ENCODE measurements at regions of chr18 and their contacts with region 1.

Region 1: GRCh38 chr18:63131106-63131958 is 188.2 kb downstream of the BCL2 start:
- DNase-seq: no peak
- ATAC-seq: peak; percentile 65
- H3K4me3 Mint-ChIP-seq: no peak overlapping the region
- H3K27ac Mint-ChIP-seq: peak overlapping the region; percentile 70
- H3K4me1 Mint-ChIP-seq: peaks cover 35% of the 10 kb centered on the region
- H3K27me3 Mint-ChIP-seq: no peaks in the 10 kb centered on the region
- CTCF ChIP-seq: no peak

Region 2: DNA sequence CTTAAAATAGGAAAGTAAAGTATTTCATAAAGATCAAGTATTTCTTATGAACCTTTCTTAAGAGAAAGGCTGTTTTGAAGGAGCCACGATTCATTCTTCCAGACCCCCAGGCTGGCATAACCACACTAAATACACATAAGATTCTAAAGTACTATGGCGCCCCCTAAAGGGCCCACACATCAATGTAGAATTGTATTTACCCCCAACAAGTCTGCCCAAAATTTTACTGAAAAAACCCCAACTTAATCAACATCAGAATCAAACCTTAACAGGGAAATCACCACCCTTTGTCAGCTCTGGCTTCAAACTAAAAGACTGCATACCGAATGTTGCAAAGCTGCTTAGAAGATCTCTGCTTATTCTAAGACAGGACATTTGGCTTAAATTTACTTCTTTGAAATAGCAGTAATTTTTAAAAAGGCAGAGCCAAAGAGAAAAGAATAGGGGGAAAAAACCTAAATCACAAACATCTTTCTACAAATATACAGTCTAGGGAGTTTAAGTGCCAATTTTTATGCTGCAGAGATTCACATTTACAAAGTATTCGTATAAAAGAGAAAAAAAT is 208.7 kb after region 1 on chr18:
- CTCF ChIA-PET with region 1: interaction called, 10 read pairs
- POLR2A ChIA-PET with region 1: no interaction called
- intact Hi-C with region 1: no loop called
- DNase-seq: no peak
- ATAC-seq: peak; percentile 45
- H3K4me3 Mint-ChIP-seq: no peak overlapping the region
- H3K27ac Mint-ChIP-seq: no peak overlapping the region
- H3K4me1 Mint-ChIP-seq: no peaks in the 10 kb centered on the region
- H3K27me3 Mint-ChIP-seq: no peaks in the 10 kb centered on the region
- CTCF ChIP-seq: no peak

Region 3: GRCh38 chr18:63648241-63648640 is 516.9 kb after region 1 on chr18:
- CTCF ChIA-PET with region 1: no interaction called
- POLR2A ChIA-PET with region 1: no interaction called
- intact Hi-C with region 1: no loop called
- DNase-seq: no peak
- ATAC-seq: no peak
- H3K4me3 Mint-ChIP-seq: no peak overlapping the region
- H3K27ac Mint-ChIP-seq: no peak overlapping the region
- H3K4me1 Mint-ChIP-seq: no peaks in the 10 kb centered on the region
- H3K27me3 Mint-ChIP-seq: peaks cover 3% of the 10 kb centered on the region
- CTCF ChIP-seq: no peak

Measured in activated B cell treated with CpG ODN at 0.5 μM for 24 hours (primary cell).